ENCODE measurements at regions of chr9 and their contacts with region 1.

Region 1: GRCh38 chr9:14133394-14133793 is 180.5 kb downstream of the NFIB start:
- DNase-seq: no peak
- ATAC-seq: no peak
- H3K4me3 ChIP-seq: no peak overlapping the region
- H3K27ac ChIP-seq: no peak overlapping the region
- H3K4me1 ChIP-seq: no peaks in the 10 kb centered on the region
- H3K27me3 ChIP-seq: no peaks in the 10 kb centered on the region
- CTCF ChIP-seq: no peak

Region 2: GRCh38 chr9:14006386-14007187 is 126.8 kb before region 1 on chr9:
- intact Hi-C with region 1: no loop called
- DNase-seq: no peak
- ATAC-seq: no peak
- H3K4me3 ChIP-seq: no peak overlapping the region
- H3K27ac ChIP-seq: no peak overlapping the region
- H3K4me1 ChIP-seq: no peaks in the 10 kb centered on the region
- H3K27me3 ChIP-seq: no peaks in the 10 kb centered on the region
- CTCF ChIP-seq: no peak

Region 3: GRCh38 chr9:14203356-14204056 is 70.1 kb after region 1 on chr9:
- intact Hi-C with region 1: loop called (anchors 10 kb)
- DNase-seq: peak; percentile 67
- ATAC-seq: peak; percentile 71
- H3K4me3 ChIP-seq: no peak overlapping the region
- H3K27ac ChIP-seq: peak overlapping the region; percentile 49
- H3K4me1 ChIP-seq: peaks cover 14% of the 10 kb centered on the region
- H3K27me3 ChIP-seq: no peaks in the 10 kb centered on the region
- CTCF ChIP-seq: no peak

Measured in upper lobe of right lung (tissue), 1 donor.